A673 (cell line): ENCODE measurements at regions of chr13 and their contacts with region 1.

Region 1: DNA sequence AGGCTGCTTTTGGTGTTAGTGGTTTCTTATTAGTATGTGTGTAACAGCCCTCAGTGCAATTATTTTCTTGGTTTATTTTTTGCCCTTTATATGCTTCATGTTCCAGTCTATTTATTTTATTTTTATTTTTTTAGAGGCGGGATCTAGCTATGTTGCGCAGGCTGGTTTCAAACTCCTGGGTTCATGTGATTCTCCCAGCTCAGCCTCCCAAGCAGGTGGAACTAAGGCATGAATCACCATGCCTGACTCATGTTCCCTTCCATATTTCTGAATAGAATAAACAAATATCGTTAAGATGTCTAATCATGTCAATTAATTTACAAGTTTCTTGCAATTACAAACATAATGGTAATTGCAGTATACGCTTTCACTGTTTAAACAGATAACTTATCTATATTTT is 11.7 kb downstream of the SKA3 start:
- DNase-seq: no peak
- H3K4me3 ChIP-seq: no peak overlapping the region
- H3K27ac ChIP-seq: no peak overlapping the region
- H3K4me1 ChIP-seq: no peaks in the 10 kb centered on the region
- H3K27me3 ChIP-seq: no peaks in the 10 kb centered on the region
- CTCF ChIP-seq: no peak

Region 2: DNA sequence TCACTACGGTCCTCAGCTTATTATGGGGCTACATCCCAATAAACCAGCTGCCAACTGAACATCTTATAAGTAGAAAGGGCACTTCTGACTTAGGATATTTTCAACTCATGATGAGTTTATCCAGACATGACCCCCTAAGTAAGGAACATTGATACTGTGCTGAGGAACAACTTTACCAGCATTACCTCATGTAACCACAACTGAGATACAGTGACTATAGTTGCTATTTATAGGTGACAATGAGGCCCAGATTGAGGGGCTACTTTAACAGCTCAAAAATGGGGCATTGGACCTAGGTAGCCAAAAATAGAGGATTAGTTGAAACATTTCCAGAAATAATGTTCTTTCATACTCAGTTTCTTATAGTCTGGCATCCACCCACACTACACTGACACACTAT is 15.1 kb before region 1 on chr13:
- CTCF ChIA-PET with region 1: no interaction called
- POLR2A ChIA-PET with region 1: interaction called, 5 read pairs
- intact Hi-C with region 1: loop called (anchors 1 kb)
- DNase-seq: no peak
- H3K4me3 ChIP-seq: no peak overlapping the region
- H3K27ac ChIP-seq: peak overlapping the region; percentile 53
- H3K4me1 ChIP-seq: peaks cover 18% of the 10 kb centered on the region
- H3K27me3 ChIP-seq: no peaks in the 10 kb centered on the region
- CTCF ChIP-seq: no peak

Region 3: GRCh38 chr13:21476893-21477472 is 312.4 kb after region 1 on chr13:
- CTCF ChIA-PET with region 1: no interaction called
- POLR2A ChIA-PET with region 1: no interaction called
- intact Hi-C with region 1: no loop called
- DNase-seq: peak; percentile 93
- H3K4me3 ChIP-seq: peak overlapping the region; percentile 23
- H3K27ac ChIP-seq: peak overlapping the region; percentile 61
- H3K4me1 ChIP-seq: peaks cover 30% of the 10 kb centered on the region
- H3K27me3 ChIP-seq: no peaks in the 10 kb centered on the region
- CTCF ChIP-seq: peak; percentile 99